ENCODE measurements at regions of chr17 and their contacts with region 1.

Region 1: GRCh38 chr17:82781894-82782274 is 30.0 kb downstream of the TBCD start:
- DNase-seq: peak; percentile 90
- ATAC-seq: peak; percentile 98

Region 2: DNA sequence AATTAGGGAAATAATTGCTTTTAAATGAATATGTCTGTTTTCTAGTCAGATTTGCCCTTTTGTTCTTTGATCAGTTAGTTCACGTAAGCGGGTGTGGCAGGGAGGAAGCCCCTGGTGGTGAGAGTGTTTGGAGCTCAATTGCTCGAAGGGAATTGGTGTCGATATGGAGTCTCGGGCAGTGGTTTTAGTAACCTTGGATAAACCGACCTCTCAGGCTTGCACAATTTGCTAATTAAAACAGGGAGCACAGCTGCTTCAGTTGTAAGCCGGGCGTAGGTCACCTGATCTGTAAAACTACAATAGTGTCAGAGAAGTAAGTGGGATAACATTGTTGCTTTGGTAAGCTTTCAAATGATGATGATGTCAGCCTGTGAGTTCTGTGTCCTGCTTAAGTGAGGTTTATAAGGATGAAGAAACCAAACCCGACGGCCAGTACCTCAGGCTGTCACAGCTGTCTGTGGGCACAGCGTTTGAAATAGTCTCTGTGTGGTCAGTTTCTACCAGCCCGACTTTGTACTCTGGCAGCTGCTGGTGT is 55.0 kb after region 1 on chr17:
- intact Hi-C with region 1: no loop called
- DNase-seq: peak; percentile 20
- ATAC-seq: peak; percentile 21

Region 3: DNA sequence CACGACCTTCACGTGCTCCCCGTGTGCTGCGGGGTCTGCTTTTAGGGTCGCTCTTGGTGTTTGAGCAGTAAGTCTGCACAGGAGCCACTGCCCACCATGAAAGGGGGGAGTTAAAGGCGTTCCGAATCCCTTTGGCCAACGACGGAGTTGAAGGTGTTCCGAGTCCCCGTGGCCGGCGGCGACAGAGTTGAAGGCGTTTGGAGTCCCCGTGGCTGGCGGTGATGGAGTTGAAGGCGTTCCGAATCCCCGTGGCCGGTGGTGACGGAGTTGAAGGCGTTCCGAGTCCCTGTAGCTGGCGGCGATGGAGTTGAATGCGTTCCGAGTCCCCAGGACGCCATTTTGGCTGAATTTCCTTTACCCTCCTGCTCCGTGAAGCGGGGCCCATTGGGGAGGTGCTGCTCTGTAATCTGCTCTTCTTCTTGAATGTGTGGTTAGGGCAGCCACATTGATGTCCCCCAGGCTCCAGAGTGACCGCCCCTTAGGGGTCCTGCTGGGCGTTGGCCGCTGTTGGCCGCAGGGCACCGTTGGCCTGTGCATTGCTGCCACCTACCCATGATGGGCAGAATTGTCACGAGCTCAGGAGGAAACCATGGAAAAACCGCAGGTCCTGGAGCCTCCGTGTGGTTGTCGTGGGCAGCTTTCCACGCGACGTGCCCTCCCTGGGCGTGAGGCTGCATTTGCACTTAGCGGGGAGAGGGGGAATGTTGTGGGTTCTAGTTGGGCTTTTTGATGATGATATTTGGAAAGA is 131.6 kb after region 1 on chr17:
- intact Hi-C with region 1: loop called (anchors 5 kb)
- DNase-seq: no peak
- ATAC-seq: peak; percentile 42

Region 4: GRCh38 chr17:83012868-83013778 is 231.2 kb after region 1 on chr17:
- intact Hi-C with region 1: no loop called
- DNase-seq: no peak
- ATAC-seq: no peak

Measured in Right ventricle myocardium superior (tissue), 1 donor.